CD8-positive, alpha-beta T cell (primary cell): ENCODE measurements at regions of chr5 and their contacts with region 1.

Region 1: GRCh38 chr5:112757468-112758208 is 20.0 kb downstream of the APC start:
- DNase-seq: peak in 3 of 9 experiments; percentile 51 to 76 (median 69)
- ATAC-seq: peak; percentile 84
- H3K4me3 ChIP-seq: no peak overlapping the region
- H3K4me3 Mint-ChIP-seq: no peak overlapping the region
- H3K27ac ChIP-seq: no peak overlapping the region
- H3K27ac Mint-ChIP-seq: peak overlapping the region; percentile 34
- H3K4me1 ChIP-seq: no peaks in the 10 kb centered on the region
- H3K4me1 Mint-ChIP-seq: peaks cover 12% of the 10 kb centered on the region
- H3K27me3 ChIP-seq: no peaks in the 10 kb centered on the region
- H3K27me3 Mint-ChIP-seq: no peaks in the 10 kb centered on the region
- CTCF ChIP-seq: peak; percentile 83

Region 2: GRCh38 chr5:112174959-112175594 is 582.6 kb before region 1 on chr5:
- CTCF ChIA-PET with region 1: interaction called, 21 read pairs
- POLR2A ChIA-PET with region 1: no interaction called
- intact Hi-C with region 1: loop called (anchors 1 kb)
- DNase-seq: peak in 5 of 9 experiments; percentile 4 to 65 (median 28)
- ATAC-seq: peak; percentile 56
- H3K4me3 ChIP-seq: no peak overlapping the region
- H3K4me3 Mint-ChIP-seq: no peak overlapping the region
- H3K27ac ChIP-seq: no peak overlapping the region
- H3K27ac Mint-ChIP-seq: no peak overlapping the region
- H3K4me1 ChIP-seq: no peaks in the 10 kb centered on the region
- H3K4me1 Mint-ChIP-seq: peaks cover 4% of the 10 kb centered on the region
- H3K27me3 ChIP-seq: no peaks in the 10 kb centered on the region
- H3K27me3 Mint-ChIP-seq: peaks cover 13% of the 10 kb centered on the region
- CTCF ChIP-seq: peak; percentile 62

Region 3: DNA sequence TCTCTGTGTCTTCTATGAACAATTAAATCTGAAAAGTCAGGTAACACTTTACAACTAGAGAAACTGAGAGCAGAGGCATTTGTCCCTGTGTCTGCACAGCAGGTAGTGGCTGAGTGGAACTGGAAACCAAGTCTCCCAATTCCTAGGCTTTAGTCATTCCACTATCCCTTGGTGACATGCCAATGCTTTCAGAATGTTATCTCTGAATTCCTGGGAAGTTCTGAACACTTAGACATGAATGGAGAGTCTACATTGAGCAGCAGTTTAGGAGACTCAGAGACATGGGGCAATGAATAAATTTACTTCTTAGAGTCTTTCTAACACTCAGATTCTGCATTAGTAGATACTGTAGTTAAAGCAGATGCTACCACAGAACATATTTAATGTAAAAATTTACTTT is 114.8 kb before region 1 on chr5:
- CTCF ChIA-PET with region 1: no interaction called
- POLR2A ChIA-PET with region 1: no interaction called
- intact Hi-C with region 1: no loop called
- DNase-seq: no peak
- ATAC-seq: no peak
- H3K4me3 ChIP-seq: no peak overlapping the region
- H3K4me3 Mint-ChIP-seq: no peak overlapping the region
- H3K27ac ChIP-seq: no peak overlapping the region
- H3K27ac Mint-ChIP-seq: no peak overlapping the region
- H3K4me1 ChIP-seq: no peaks in the 10 kb centered on the region
- H3K4me1 Mint-ChIP-seq: no peaks in the 10 kb centered on the region
- H3K27me3 ChIP-seq: no peaks in the 10 kb centered on the region
- H3K27me3 Mint-ChIP-seq: peaks cover 4% of the 10 kb centered on the region
- CTCF ChIP-seq: no peak

Region 4: GRCh38 chr5:112691758-112692157 is 65.9 kb before region 1 on chr5:
- CTCF ChIA-PET with region 1: interaction called, 51 read pairs
- POLR2A ChIA-PET with region 1: no interaction called
- intact Hi-C with region 1: loop called (anchors 1 to 2 kb)
- DNase-seq: peak in 3 of 9 experiments; percentile 10 to 74 (median 40)
- ATAC-seq: peak; percentile 36
- H3K4me3 ChIP-seq: no peak overlapping the region
- H3K4me3 Mint-ChIP-seq: no peak overlapping the region
- H3K27ac ChIP-seq: no peak overlapping the region
- H3K27ac Mint-ChIP-seq: no peak overlapping the region
- H3K4me1 ChIP-seq: no peaks in the 10 kb centered on the region
- H3K4me1 Mint-ChIP-seq: no peaks in the 10 kb centered on the region
- H3K27me3 ChIP-seq: peaks cover 0 to 2% of the 10 kb centered on the region in 2 experiments
- H3K27me3 Mint-ChIP-seq: peaks cover 38% of the 10 kb centered on the region
- CTCF ChIP-seq: no peak

Region 5: GRCh38 chr5:112737463-112738190 is 20.0 kb before region 1 on chr5 and contains the start of gene APC:
- CTCF ChIA-PET with region 1: interaction called, 12 read pairs
- POLR2A ChIA-PET with region 1: no interaction called
- intact Hi-C with region 1: loop called in 1 of 2 experiments (anchors 1 kb)
- DNase-seq: peak; percentile 52 to 88 (median 74)
- ATAC-seq: peak; percentile 96
- H3K4me3 ChIP-seq: peak within 1 kb of the TSS; percentile 62 to 79
- H3K4me3 Mint-ChIP-seq: peak within 1 kb of the TSS; percentile 95
- H3K27ac ChIP-seq: peak within 1 kb of the TSS; percentile 18 to 26
- H3K27ac Mint-ChIP-seq: peak within 1 kb of the TSS; percentile 69
- H3K4me1 ChIP-seq: peaks cover 10% of the 10 kb centered on the region
- H3K4me1 Mint-ChIP-seq: peaks cover 33% of the 10 kb centered on the region
- H3K27me3 ChIP-seq: no peaks in the 10 kb centered on the region
- H3K27me3 Mint-ChIP-seq: no peaks in the 10 kb centered on the region
- CTCF ChIP-seq: no peak
- total RNA-seq, gene APC: 14.5 to 19.1 TPM

Region 6: GRCh38 chr5:112776301-112776856 is 18.7 kb after region 1 on chr5:
- CTCF ChIA-PET with region 1: interaction called, 10 read pairs
- POLR2A ChIA-PET with region 1: no interaction called
- intact Hi-C with region 1: no loop called
- DNase-seq: no peak
- ATAC-seq: no peak
- H3K4me3 ChIP-seq: no peak overlapping the region
- H3K4me3 Mint-ChIP-seq: no peak overlapping the region
- H3K27ac ChIP-seq: no peak overlapping the region
- H3K27ac Mint-ChIP-seq: no peak overlapping the region
- H3K4me1 ChIP-seq: no peaks in the 10 kb centered on the region
- H3K4me1 Mint-ChIP-seq: no peaks in the 10 kb centered on the region
- H3K27me3 ChIP-seq: no peaks in the 10 kb centered on the region
- H3K27me3 Mint-ChIP-seq: no peaks in the 10 kb centered on the region
- CTCF ChIP-seq: no peak

Region 7: DNA sequence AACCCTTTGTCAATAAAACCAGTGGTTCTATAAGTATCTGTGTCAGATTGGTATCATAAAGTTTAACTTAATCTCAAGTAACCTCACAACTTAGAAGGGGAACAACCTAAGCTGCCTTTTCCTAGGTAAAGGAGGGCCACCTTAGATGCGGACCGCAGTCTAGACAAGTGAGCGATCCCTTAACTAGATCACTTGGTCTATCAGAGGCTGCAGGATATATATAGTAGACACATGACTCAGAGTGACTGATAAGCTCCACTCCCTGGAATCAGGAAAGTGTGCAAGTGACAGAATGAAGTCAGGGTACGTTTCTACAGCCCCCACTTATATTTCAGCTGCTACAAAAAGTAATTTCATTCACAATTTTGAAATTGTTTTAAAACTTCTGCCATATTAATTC is 156.9 kb after region 1 on chr5:
- CTCF ChIA-PET with region 1: no interaction called
- POLR2A ChIA-PET with region 1: no interaction called
- intact Hi-C with region 1: no loop called
- DNase-seq: no peak
- ATAC-seq: no peak
- H3K4me3 ChIP-seq: no peak overlapping the region
- H3K4me3 Mint-ChIP-seq: no peak overlapping the region
- H3K27ac ChIP-seq: no peak overlapping the region
- H3K27ac Mint-ChIP-seq: no peak overlapping the region
- H3K4me1 ChIP-seq: peaks cover 23% of the 10 kb centered on the region
- H3K4me1 Mint-ChIP-seq: peaks cover 70% of the 10 kb centered on the region
- H3K27me3 ChIP-seq: no peaks in the 10 kb centered on the region
- H3K27me3 Mint-ChIP-seq: no peaks in the 10 kb centered on the region
- CTCF ChIP-seq: no peak

Region 8: GRCh38 chr5:113140837-113141661 is 383.4 kb after region 1 on chr5:
- CTCF ChIA-PET with region 1: no interaction called
- POLR2A ChIA-PET with region 1: no interaction called
- intact Hi-C with region 1: no loop called
- DNase-seq: no peak
- ATAC-seq: no peak
- H3K4me3 ChIP-seq: no peak overlapping the region
- H3K4me3 Mint-ChIP-seq: no peak overlapping the region
- H3K27ac ChIP-seq: no peak overlapping the region
- H3K27ac Mint-ChIP-seq: no peak overlapping the region
- H3K4me1 ChIP-seq: no peaks in the 10 kb centered on the region
- H3K4me1 Mint-ChIP-seq: no peaks in the 10 kb centered on the region
- H3K27me3 ChIP-seq: no peaks in the 10 kb centered on the region
- H3K27me3 Mint-ChIP-seq: no peaks in the 10 kb centered on the region
- CTCF ChIP-seq: no peak